ENCODE measurements at regions of chr19 and their contacts with region 1.

Region 1: DNA sequence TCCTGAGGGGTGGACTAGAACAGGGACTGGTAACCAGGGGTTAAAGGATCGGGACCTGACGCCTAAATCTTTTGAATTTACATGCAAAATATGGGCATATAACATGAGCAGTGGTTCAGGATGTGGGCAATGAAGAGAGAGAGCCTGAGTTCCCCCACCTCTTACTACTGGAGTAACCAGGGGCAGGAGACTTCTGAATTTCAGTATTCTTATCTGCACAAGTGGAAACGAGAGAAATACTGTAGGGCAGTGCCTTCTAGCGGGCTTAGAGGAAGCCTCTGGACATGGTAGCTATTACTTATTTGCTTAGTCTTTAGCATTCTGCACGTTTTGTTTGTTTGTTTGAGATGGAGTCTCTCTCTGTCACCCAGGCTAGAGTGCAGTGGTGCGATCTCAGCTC is 26.3 kb downstream of the BCAT2 start:
- DNase-seq: no peak
- ATAC-seq: no peak
- H3K4me3 ChIP-seq: no peak overlapping the region
- H3K4me3 Mint-ChIP-seq: no peak overlapping the region
- H3K27ac ChIP-seq: no peak overlapping the region
- H3K27ac Mint-ChIP-seq: no peak overlapping the region
- H3K4me1 ChIP-seq: peaks cover 0 to 6% of the 10 kb centered on the region in 2 experiments
- H3K4me1 Mint-ChIP-seq: peaks cover 3 to 5% (median 3%) of the 10 kb centered on the region in 3 donors
- H3K27me3 ChIP-seq: peaks cover 0 to 28% of the 10 kb centered on the region in 2 experiments
- H3K27me3 Mint-ChIP-seq: peaks cover 3 to 8% of the 10 kb centered on the region in 2 donors

Region 2: DNA sequence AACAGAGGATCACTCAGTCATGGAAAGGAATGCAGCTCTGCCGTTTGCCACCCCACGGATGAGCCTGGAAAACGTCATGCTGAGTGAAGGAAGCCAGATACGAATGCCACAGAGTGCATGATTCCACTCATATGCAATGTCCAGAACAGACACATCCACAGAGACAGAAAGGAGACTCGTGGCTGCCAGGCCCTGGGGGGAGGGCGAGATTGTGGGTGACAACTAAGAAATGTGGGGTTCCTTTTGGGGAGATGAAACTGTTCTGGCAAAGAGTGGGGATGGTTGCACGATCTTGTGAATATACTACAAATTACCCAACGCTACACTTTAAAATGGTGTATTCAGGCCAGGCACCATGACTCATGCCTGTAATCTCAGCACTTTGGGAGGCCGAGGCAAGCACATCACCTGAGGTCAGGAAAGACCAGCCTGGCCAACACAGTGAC is 1242.5 kb before region 1 on chr19:
- CTCF ChIA-PET with region 1: no interaction called
- POLR2A ChIA-PET with region 1: no interaction called
- DNase-seq: no peak
- ATAC-seq: no peak
- H3K4me3 ChIP-seq: peak overlapping the region in 1 of 2 donors; percentile 1
- H3K4me3 Mint-ChIP-seq: peak overlapping the region in 2 of 3 donors; percentile 5 to 25
- H3K27ac ChIP-seq: peak overlapping the region; percentile 72
- H3K27ac Mint-ChIP-seq: peak overlapping the region; percentile 78 to 83
- H3K4me1 ChIP-seq: peaks cover 2 to 50% of the 10 kb centered on the region in 2 experiments
- H3K4me1 Mint-ChIP-seq: peaks cover 17 to 28% (median 19%) of the 10 kb centered on the region in 3 donors
- H3K27me3 ChIP-seq: peaks cover 0 to 36% of the 10 kb centered on the region in 2 experiments
- H3K27me3 Mint-ChIP-seq: peaks cover 0 to 6% of the 10 kb centered on the region in 2 donors

Region 3: DNA sequence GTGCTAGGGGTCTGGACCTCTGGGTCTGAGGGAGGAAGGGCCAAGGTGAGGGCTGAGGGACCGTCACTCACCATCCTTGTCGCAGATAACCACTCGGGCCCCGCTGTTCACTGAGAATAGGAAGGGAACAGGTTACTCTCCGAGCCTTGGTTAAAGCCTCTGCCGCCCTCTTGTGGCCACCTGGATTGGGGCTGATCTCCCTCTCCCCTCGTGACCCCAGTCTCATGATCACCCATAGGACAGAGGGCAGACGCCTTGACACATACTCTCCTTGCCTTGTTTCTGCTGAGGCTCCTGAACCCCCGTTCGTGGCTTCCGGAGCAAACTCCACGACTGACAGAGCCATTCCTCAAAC is 51.2 kb after region 1 on chr19:
- CTCF ChIA-PET with region 1: interaction called, 5 to 14 read pairs
- POLR2A ChIA-PET with region 1: no interaction called
- DNase-seq: peak; percentile 76 to 96 (median 91)
- ATAC-seq: peak; percentile 83 to 93 (median 90)
- H3K4me3 ChIP-seq: peak overlapping the region; percentile 13 to 46
- H3K4me3 Mint-ChIP-seq: peak overlapping the region; percentile 78 to 92 (median 79)
- H3K27ac ChIP-seq: no peak overlapping the region
- H3K27ac Mint-ChIP-seq: peak overlapping the region; percentile 46 to 80
- H3K4me1 ChIP-seq: peaks cover 3 to 28% of the 10 kb centered on the region in 2 experiments
- H3K4me1 Mint-ChIP-seq: peaks cover 18 to 25% (median 19%) of the 10 kb centered on the region in 3 donors
- H3K27me3 ChIP-seq: peaks cover 0 to 33% of the 10 kb centered on the region in 2 experiments
- H3K27me3 Mint-ChIP-seq: peaks cover 3 to 11% of the 10 kb centered on the region in 2 donors

Measured in T-cell (primary cell).